ENCODE measurements at regions of chr1 and their contacts with region 1.

Region 1: DNA sequence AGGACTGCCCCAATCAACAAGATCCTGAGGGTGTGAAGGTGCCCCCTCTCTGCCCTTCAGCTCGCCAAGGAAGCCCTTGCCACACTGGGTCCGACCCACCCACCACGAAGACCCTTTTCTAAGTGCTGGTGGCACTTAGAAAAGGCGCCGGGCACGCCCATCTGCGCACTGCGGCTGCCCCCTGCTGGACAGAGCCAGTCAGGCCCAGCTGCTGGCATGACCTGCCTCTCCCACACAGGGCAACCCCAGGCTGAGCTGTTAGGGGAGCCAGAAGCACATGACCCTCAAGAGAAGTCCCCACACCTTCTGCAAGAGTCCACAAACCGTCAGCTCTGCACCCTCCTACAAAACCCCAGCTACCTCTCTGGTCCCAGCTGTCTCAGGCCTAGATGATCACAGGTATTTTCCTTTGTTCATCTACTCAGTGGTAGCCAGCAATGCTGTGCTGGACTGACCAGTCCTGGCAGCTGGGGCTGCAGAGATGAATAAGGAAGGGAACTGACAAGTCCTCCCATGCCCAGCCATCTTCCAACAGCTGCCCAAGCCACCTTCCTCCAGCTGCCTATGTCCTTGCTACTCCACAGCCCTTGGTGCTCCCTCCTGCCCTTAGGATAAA is 40.0 kb upstream of the ZC3H12A start:
- DNase-seq: peak; percentile 88
- ATAC-seq: peak; percentile 91
- H3K4me3 Mint-ChIP-seq: no peak overlapping the region
- H3K27ac Mint-ChIP-seq: no peak overlapping the region
- H3K4me1 Mint-ChIP-seq: peaks cover 23% of the 10 kb centered on the region
- H3K27me3 Mint-ChIP-seq: peaks cover 29% of the 10 kb centered on the region
- CTCF ChIP-seq: peak; percentile 90

Region 2: GRCh38 chr1:37391211-37392011 is 43.0 kb before region 1 on chr1:
- CTCF ChIA-PET with region 1: interaction called, 26 read pairs
- POLR2A ChIA-PET with region 1: no interaction called
- DNase-seq: peak; percentile 46
- ATAC-seq: peak; percentile 32
- H3K4me3 Mint-ChIP-seq: no peak overlapping the region
- H3K27ac Mint-ChIP-seq: no peak overlapping the region
- H3K4me1 Mint-ChIP-seq: peaks cover 31% of the 10 kb centered on the region
- H3K27me3 Mint-ChIP-seq: no peaks in the 10 kb centered on the region
- CTCF ChIP-seq: no peak

Region 3: DNA sequence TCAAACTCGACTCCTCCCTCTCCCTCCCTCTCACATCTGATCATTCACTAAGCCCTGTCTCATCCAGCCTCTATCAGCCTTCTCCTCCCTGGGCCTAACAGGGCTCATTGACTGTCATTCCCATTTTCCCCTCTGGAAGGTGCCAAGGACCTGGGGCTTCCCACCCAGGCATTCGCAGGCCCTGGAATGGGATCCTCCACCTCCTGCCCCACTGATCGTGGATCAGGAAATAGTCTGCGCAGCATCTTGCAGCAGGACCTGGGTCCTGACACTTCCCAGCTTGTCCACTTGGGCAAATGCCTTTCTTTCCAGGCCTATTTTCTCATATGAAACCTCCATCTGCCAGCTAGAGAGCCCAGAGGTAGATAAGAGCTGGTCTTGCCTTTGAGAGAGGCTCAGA is 31.2 kb before region 1 on chr1:
- CTCF ChIA-PET with region 1: interaction called, 10 read pairs
- POLR2A ChIA-PET with region 1: no interaction called
- DNase-seq: no peak
- ATAC-seq: peak; percentile 74
- H3K4me3 Mint-ChIP-seq: no peak overlapping the region
- H3K27ac Mint-ChIP-seq: no peak overlapping the region
- H3K4me1 Mint-ChIP-seq: no peaks in the 10 kb centered on the region
- H3K27me3 Mint-ChIP-seq: no peaks in the 10 kb centered on the region; the same call in 1 of the 2 replicates
- CTCF ChIP-seq: no peak

Region 4: GRCh38 chr1:37410815-37411214 is 23.6 kb before region 1 on chr1:
- CTCF ChIA-PET with region 1: interaction called, 16 read pairs
- POLR2A ChIA-PET with region 1: no interaction called
- DNase-seq: peak; percentile 81
- ATAC-seq: peak; percentile 84
- H3K4me3 Mint-ChIP-seq: no peak overlapping the region
- H3K27ac Mint-ChIP-seq: no peak overlapping the region
- H3K4me1 Mint-ChIP-seq: peaks cover 14% of the 10 kb centered on the region
- H3K27me3 Mint-ChIP-seq: peaks cover 3% of the 10 kb centered on the region; the same call in 1 of the 2 replicates
- CTCF ChIP-seq: no peak

Region 5: DNA sequence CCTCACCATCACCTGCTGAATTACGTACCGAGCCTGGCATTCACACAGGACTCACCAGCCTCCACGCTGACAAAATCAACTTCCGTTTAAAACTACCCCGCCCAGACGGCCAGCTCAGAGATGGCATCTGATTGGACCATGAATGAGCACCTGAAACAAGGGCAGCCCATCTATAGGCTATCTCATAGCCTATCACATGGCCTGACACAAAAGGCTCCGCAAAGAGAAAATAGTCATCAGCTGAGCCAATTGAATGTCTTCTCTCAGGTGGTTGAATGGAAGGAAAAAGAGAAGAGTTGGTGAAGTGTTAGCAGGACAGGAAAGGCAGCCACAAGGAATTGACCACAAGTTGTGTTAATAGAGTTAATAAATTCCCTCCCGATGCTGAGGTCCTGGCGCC is 10.6 kb before region 1 on chr1:
- CTCF ChIA-PET with region 1: interaction called, 20 read pairs
- POLR2A ChIA-PET with region 1: no interaction called
- DNase-seq: no peak
- ATAC-seq: peak; percentile 48; the same call in 1 of the 2 replicates
- H3K4me3 Mint-ChIP-seq: no peak overlapping the region
- H3K27ac Mint-ChIP-seq: no peak overlapping the region
- H3K4me1 Mint-ChIP-seq: peaks cover 2% of the 10 kb centered on the region; the same call in 1 of the 2 replicates
- H3K27me3 Mint-ChIP-seq: no peaks in the 10 kb centered on the region; the same call in 1 of the 2 replicates
- CTCF ChIP-seq: no peak

Region 6: GRCh38 chr1:37449936-37450335 is 15.5 kb after region 1 on chr1:
- CTCF ChIA-PET with region 1: interaction called, 19 read pairs
- POLR2A ChIA-PET with region 1: no interaction called
- DNase-seq: no peak
- ATAC-seq: no peak
- H3K4me3 Mint-ChIP-seq: no peak overlapping the region
- H3K27ac Mint-ChIP-seq: no peak overlapping the region
- H3K4me1 Mint-ChIP-seq: peaks cover 61% of the 10 kb centered on the region
- H3K27me3 Mint-ChIP-seq: peaks cover 5% of the 10 kb centered on the region
- CTCF ChIP-seq: no peak

Region 7: GRCh38 chr1:37622131-37622530 is 187.7 kb after region 1 on chr1:
- CTCF ChIA-PET with region 1: no interaction called
- POLR2A ChIA-PET with region 1: no interaction called
- DNase-seq: peak; percentile 38
- ATAC-seq: peak; percentile 86
- H3K4me3 Mint-ChIP-seq: no peak overlapping the region
- H3K27ac Mint-ChIP-seq: no peak overlapping the region
- H3K4me1 Mint-ChIP-seq: no peaks in the 10 kb centered on the region
- H3K27me3 Mint-ChIP-seq: peaks cover 22% of the 10 kb centered on the region
- CTCF ChIP-seq: no peak